ENCODE measurements at regions of chr11 and their contacts with region 1.

Region 1: DNA sequence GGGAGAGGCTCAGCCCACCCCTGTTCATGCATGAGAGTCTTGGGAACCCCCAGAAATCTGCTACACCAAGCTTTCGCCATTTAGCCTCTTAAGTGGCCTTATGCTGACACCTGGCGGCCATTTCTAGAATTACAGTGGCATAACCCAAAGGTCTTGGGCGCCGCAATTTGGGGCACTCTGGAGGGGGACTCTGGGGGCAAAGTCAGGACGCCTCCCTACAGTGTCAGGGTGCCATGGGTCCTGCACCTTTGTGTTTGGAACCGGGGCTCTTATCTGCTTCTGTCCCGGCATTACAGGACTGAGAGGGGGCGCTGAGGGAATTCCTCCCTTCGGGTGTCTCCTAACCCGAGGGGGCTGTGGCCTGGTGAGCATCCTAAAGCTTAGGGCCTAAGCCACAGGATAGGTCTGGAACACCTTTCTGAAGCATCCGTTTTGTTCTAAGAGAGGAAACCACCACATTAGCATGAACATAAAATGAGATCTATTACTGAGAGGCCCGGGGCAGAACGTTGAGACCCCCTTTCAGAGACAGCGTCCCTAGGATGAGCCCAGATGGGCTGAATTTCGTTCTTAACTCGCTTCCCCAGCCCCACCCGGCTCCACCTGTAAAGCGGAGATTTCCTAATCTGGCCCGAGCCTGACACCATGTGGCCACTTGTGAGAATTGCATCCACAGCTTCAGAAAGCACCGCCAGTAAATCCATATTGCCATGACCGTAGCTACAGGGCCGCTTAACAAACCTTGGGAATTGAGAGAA is 9.3 kb downstream of the INS start:
- DNase-seq: peak; percentile 67
- H3K4me3 ChIP-seq: peak overlapping the region; percentile 33
- H3K27ac ChIP-seq: peak overlapping the region; percentile 18
- H3K4me1 ChIP-seq: peaks cover 12% of the 10 kb centered on the region
- H3K27me3 ChIP-seq: peaks cover 66% of the 10 kb centered on the region
- CTCF ChIP-seq: peak; percentile 74

Region 2: DNA sequence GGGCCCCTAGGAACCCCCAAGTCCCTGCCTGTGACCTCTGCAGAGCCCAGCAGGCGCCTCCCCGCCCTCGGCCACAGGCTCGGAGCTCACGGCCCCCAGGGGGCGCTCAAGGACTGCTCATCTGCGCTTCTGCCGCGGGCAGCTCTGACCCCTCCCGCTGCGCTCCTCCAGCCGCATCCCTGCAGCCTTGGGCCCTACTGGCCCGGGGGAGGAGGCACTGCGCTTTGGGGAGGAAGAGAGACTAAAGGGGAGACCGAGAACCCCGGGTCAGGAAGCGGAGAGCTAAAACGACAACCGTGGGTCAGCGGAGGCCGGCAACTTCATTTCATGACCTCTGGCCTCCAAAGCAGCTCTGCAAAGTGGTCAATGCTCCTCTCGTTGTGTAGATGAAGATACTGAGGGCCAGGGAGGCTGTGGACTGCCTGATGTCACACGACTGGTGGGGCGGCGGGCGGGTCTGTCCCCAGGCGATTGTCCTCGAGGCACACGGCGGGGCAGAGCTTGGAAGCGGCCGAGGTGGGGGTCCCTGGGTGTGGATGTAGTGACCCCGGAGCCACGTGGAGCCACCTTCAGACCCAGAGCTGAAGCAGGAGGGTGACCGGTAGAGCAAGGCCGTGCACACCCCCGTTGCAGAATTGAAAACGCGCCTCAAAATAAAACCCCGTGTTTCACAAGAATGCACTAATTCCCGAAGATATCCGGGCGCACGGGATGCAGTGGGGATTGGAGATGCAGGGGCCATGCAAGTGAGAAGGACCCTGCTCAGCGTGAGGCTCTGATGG is 457.4 kb before region 1 on chr11:
- intact Hi-C with region 1: loop called (anchors 10 kb)
- DNase-seq: peak; percentile 90
- H3K4me3 ChIP-seq: peak overlapping the region; percentile 61
- H3K27ac ChIP-seq: peak overlapping the region; percentile 77
- H3K4me1 ChIP-seq: peaks cover 15% of the 10 kb centered on the region
- H3K27me3 ChIP-seq: peaks cover 15% of the 10 kb centered on the region
- CTCF ChIP-seq: peak; percentile 94

Region 3: DNA sequence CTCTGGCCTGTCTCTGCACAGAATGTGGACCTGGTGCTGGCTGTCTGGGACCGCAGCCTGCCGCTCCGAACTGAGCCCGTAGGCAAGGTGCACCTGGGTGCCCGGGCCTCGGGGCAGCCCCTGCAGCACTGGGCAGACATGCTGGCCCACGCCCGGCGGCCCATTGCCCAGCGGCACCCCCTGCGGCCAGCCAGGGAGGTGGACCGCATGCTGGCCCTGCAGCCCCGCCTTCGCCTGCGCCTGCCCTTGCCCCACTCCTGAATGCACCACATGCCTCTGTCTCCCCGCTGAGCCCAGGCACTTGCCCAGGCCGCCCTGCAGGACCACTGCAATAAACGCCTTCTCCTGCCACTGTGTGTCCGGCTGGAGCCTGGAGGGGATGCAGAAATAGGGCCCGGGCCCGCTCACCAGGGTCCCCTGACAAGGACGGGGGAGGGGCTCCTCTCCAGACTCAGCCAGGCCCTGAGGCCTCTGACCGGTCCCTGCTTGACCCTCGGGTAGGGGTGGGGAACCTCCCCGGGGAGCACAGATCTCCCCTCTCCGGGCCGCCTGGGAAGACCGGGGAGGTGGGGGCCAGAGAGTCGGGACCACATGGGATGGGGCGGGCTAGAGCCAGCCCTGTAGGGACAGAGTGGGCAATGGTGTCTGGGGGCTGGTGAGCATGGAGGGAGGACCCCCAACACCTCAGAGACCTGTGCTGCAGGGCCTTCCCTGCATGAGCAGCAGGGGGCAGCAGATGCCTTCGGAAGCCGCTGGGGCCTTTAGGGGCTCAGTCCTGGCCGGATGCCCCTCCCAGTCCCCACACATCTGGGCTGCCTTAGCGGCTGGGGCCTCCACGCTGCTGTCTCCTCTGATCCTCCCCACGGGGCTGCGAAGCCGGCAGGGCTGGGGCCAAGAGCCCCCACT is 314.3 kb before region 1 on chr11:
- intact Hi-C with region 1: loop called (anchors 5 kb)
- DNase-seq: peak; percentile 69
- H3K4me3 ChIP-seq: no peak overlapping the region
- H3K27ac ChIP-seq: no peak overlapping the region
- H3K4me1 ChIP-seq: peaks cover 35% of the 10 kb centered on the region
- H3K27me3 ChIP-seq: no peaks in the 10 kb centered on the region
- CTCF ChIP-seq: peak; percentile 93